ENCODE measurements at regions of chr11 and their contacts with region 1.

Region 1: DNA sequence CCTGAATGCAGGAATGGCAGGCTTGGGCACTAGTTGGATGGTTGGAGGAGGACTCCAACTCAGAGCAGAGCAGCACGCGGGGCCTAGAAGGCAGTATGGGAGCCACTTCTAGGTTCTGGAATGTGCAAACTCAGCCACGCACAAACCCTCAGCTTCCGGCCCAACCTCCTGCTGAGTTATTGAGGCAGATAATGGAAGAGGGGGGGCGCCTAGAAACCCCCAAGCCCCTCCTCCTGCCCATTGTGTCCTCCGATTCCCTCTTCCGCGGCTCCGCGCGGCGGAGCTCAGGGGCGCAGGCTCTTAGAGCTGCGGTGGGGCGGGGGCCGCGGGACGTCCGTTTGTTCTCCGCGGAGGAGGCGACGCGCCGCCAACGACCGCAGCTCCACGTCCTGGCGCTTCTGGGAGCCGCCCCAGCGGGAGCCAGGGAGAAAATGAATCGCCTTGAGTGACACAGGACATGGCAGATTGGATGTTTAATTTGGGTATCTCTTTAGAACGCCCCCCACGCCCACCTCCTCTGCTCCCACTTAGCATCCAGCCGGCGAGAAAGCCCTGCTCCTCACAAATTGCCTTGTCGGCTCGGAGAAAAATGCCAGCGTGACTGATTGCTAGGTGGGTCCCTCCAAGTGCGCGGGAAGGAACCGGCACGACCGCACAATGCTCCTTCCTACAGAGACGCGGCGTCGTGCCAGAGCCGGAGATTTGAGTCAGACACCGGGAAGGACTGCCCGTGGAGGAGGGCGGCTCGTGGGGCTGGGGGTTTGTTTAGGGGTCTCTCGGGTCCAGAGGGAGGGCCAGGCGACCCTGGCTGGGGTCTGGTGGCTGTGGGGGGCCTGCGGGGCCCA is 144.6 kb downstream of the NECTIN1 start:
- DNase-seq: peak; percentile 15 to 83 (median 62)
- H3K4me3 ChIP-seq: peak overlapping the region; percentile 40 to 82 (median 65)
- H3K27ac ChIP-seq: peak overlapping the region in 57 of 59 donors; percentile 20 to 92 (median 74)
- H3K27me3 ChIP-seq: no peaks in the 10 kb centered on the region
- CTCF ChIP-seq: peak in 13 of 56 donors; percentile 3 to 45 (median 14)

Region 2: DNA sequence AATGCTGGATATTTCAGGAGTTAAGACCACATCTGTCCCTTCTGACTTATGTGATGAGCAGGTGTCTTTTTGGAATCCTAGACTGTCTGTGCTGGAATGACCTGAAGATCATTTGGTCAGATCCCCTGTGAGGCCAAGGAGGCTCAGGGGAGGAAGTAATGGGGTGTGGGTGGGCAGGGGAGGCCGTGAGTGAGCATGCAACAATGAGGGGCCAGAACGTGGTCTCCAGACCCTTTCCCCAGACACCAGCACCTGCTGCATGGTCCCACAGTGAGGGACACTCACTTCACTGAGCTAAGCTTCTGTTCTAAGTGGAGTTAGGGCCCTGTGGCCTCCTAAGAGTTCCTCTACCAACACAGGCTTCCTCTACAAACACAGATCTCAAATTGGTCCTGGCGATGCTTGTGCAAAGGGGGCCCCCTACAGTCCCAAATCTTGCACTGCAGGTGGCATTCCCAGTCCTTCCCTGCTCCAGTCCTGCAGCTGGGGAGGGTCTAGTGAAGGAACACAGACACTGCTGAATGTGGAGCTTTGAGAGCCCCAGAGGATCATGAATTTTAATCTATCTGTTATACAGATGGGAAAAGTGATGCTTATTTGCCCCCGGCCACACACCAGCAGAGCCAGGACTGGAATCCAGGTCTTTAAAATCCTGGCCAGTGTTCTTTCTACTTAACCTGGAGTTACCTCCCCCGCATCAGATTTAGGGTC is 210.3 kb before region 1 on chr11:
- intact Hi-C with region 1: no loop called
- DNase-seq: peak; percentile 72 to 95 (median 88)
- H3K4me3 ChIP-seq: peak overlapping the region in 19 of 59 donors; percentile 14 to 70 (median 58)
- H3K27ac ChIP-seq: peak overlapping the region; percentile 75 to 100 (median 99)
- H3K27me3 ChIP-seq: no peaks in the 10 kb centered on the region
- CTCF ChIP-seq: peak; percentile 78 to 97 (median 94)

Region 3: GRCh38 chr11:119432484-119433357 is 151.7 kb before region 1 on chr11:
- intact Hi-C with region 1: no loop called
- DNase-seq: peak in 2 of 10 donors; percentile 26 to 49
- H3K4me3 ChIP-seq: peak overlapping the region in 16 of 59 donors; percentile 1 to 37 (median 16)
- H3K27ac ChIP-seq: peak overlapping the region in 42 of 59 donors; percentile 14 to 82 (median 52)
- H3K27me3 ChIP-seq: no peaks in the 10 kb centered on the region
- CTCF ChIP-seq: no peak

Region 4: DNA sequence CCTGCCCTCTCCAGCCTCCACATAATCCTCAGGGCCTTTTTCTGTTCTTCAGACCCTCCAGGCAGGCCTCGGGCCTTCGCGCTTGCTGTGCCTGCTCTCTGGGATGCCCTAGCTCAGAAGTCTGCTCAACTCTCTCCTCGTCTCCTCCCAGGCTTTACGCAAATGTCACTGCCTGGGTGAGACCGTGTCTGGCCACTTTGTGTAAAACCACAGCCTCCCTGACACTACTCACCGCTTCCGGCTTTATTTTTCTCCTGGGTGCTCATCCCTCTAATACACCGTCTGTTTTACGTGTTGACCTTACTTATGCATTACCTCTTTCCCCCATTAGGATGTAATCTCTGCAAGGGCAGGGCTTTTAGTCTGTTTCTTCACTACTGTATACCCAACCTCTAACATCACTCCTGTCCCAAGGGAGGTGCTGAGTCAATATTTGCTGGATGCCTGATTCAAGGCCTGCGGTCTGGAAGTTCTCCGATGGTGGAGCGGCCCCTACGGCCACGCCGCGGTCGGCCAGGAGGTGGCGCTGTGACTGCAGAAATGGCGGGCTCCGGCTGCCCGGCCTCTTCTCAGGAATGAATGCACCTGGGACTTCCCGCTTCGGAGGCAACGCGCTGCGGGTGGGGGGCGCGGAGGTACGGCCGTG is 103.3 kb before region 1 on chr11:
- intact Hi-C with region 1: loop called (anchors 5 kb)
- DNase-seq: peak; percentile 67 to 93 (median 86)
- H3K4me3 ChIP-seq: peak overlapping the region in 43 of 59 donors; percentile 3 to 53 (median 33)
- H3K27ac ChIP-seq: peak overlapping the region in 3 of 59 donors; percentile 15 to 44 (median 22)
- H3K27me3 ChIP-seq: no peaks in the 10 kb centered on the region
- CTCF ChIP-seq: peak; percentile 87 to 100 (median 99)

Region 5: GRCh38 chr11:119533921-119534736 is 50.3 kb before region 1 on chr11:
- intact Hi-C with region 1: loop called (anchors 5 kb)
- DNase-seq: peak; percentile 76 to 90 (median 82)
- H3K4me3 ChIP-seq: peak overlapping the region in 3 of 59 donors; percentile 1 to 11 (median 5)
- H3K27ac ChIP-seq: peak overlapping the region in 29 of 59 donors; percentile 2 to 73 (median 41)
- H3K27me3 ChIP-seq: no peaks in the 10 kb centered on the region
- CTCF ChIP-seq: peak; percentile 66 to 99 (median 93)

Region 6: DNA sequence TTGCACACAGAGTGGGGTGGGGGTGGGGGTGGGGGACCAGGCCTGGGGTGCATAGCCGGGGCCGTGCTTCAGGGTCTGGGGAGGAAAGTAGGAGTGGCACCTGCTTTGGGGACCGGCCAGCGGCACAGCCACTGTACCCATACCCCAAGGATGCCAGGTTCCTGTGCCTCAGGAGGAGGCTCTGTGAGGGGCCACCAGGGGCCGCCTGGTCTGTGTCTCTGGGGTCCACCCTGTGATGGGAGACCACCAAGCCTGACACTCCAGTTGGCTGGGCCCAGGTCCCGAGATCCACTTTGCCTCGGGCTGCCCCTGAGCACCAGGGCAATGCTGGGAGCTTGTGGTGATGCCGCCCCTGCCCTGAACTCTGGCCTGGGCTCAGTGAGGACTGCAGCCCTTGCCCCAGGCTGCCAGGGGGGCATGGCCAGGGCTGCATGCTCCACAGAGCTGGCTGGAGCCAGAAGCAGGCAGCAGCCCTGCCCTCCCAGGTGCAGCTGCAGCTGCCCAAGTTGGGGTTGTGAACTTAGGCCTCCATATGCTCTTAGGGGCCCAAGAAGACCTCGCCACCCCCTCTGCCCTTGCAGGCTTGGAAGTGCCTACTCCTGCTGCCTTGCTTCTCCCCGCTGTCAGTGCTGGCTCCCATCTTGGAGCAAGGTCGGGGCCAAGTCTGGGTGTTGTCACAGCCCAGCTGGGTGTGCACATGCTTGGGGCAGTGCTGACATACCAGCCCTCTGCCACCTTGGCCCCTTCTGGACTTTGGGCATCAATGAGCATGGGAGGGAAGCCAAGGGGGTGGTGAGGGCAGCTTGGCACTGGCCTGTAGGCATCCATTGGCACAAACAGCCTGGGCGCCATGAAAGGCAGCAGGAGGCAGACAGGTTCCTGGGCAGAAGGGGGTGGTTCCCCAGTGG is 38.2 kb before region 1 on chr11:
- intact Hi-C with region 1: no loop called
- DNase-seq: peak in 2 of 10 donors; percentile 25 to 27
- H3K4me3 ChIP-seq: no peak overlapping the region
- H3K27ac ChIP-seq: no peak overlapping the region
- H3K27me3 ChIP-seq: no peaks in the 10 kb centered on the region
- CTCF ChIP-seq: no peak

Region 7: GRCh38 chr11:119567688-119568582 is 16.5 kb before region 1 on chr11:
- intact Hi-C with region 1: loop called in 1 of 2 experiments (anchors 2 kb)
- DNase-seq: peak in 3 of 10 donors; percentile 53 to 61 (median 57)
- H3K4me3 ChIP-seq: peak overlapping the region in 1 of 59 donors; percentile 2
- H3K27ac ChIP-seq: peak overlapping the region in 48 of 59 donors; percentile 2 to 78 (median 54)
- H3K27me3 ChIP-seq: no peaks in the 10 kb centered on the region
- CTCF ChIP-seq: peak in 2 of 56 donors; percentile 8 to 10

Region 8: GRCh38 chr11:119607726-119608125 is 23.3 kb after region 1 on chr11:
- intact Hi-C with region 1: loop called in 1 of 2 experiments (anchors 2 kb)
- DNase-seq: peak in 7 of 10 donors; percentile 51 to 81 (median 64)
- H3K4me3 ChIP-seq: peak overlapping the region in 31 of 59 donors; percentile 1 to 42 (median 24)
- H3K27ac ChIP-seq: peak overlapping the region; percentile 61 to 99 (median 96)
- H3K27me3 ChIP-seq: no peaks in the 10 kb centered on the region
- CTCF ChIP-seq: peak in 4 of 56 donors; percentile 4 to 29 (median 26)

Region 9: GRCh38 chr11:119615003-119615881 is 30.8 kb after region 1 on chr11:
- intact Hi-C with region 1: loop called in 1 of 2 experiments (anchors 2 kb)
- DNase-seq: peak in 9 of 10 donors; percentile 64 to 90 (median 80)
- H3K4me3 ChIP-seq: no peak overlapping the region
- H3K27ac ChIP-seq: peak overlapping the region; percentile 34 to 99 (median 92)
- H3K27me3 ChIP-seq: no peaks in the 10 kb centered on the region
- CTCF ChIP-seq: peak in 5 of 56 donors; percentile 9 to 27 (median 17)